Activated T-helper 1 cell treated with anti-CD3 and anti-CD28 coated beads, Interleukin-12 subunit alpha, Interleukin-12 subunit beta, Interleukin-2, Interleukin-4 antibody, amounts not matched to agents 30 ng/mL and 10 ng/mL and 1 ng/mL, durations not matched to agents 14 hours and 24 hours and 36 hours (primary cell): ENCODE measurements at regions of chr21 and their contacts with region 1.

Region 1: GRCh38 chr21:34967509-34968289 is 81.4 kb downstream of the RUNX1 start:
- DNase-seq: no peak
- H3K4me3 Mint-ChIP-seq: peak overlapping the region; percentile 80
- H3K27ac Mint-ChIP-seq: peak overlapping the region; percentile 94
- H3K4me1 Mint-ChIP-seq: peaks cover 91% of the 10 kb centered on the region
- H3K27me3 Mint-ChIP-seq: peaks cover 2% of the 10 kb centered on the region

Region 2: GRCh38 chr21:34933609-34934335 is 33.9 kb before region 1 on chr21:
- intact Hi-C with region 1: loop called (anchors 1 kb)
- DNase-seq: peak; percentile 37
- H3K4me3 Mint-ChIP-seq: peak overlapping the region; percentile 75
- H3K27ac Mint-ChIP-seq: peak overlapping the region; percentile 95
- H3K4me1 Mint-ChIP-seq: peaks cover 86% of the 10 kb centered on the region
- H3K27me3 Mint-ChIP-seq: no peaks in the 10 kb centered on the region

Region 3: GRCh38 chr21:35026617-35027562 is 59.2 kb after region 1 on chr21:
- intact Hi-C with region 1: loop called (anchors 1 kb)
- DNase-seq: peak; percentile 83
- H3K4me3 Mint-ChIP-seq: peak overlapping the region; percentile 85
- H3K27ac Mint-ChIP-seq: peak overlapping the region; percentile 99
- H3K4me1 Mint-ChIP-seq: peaks cover 91% of the 10 kb centered on the region
- H3K27me3 Mint-ChIP-seq: no peaks in the 10 kb centered on the region

Region 4: DNA sequence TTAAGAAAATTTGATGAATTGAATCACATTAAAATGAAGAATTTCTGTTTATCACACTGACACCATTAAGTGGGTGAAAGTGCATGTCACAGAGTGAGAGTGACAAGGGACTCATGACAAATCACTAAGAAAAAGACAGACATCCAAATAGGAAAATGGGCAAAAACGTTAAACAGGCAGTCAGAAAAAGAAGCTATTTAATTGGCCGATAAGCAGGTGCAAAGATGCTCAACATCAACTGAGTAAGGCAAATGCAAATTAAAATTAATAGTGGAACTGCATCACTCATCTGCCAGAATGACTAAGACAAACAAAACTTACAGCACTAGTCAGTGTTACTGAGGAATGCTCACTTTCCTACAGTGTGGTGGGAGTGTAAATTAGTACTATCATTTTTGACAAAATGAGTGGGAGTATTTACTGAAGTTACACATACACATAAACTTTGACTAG is 120.6 kb after region 1 on chr21:
- intact Hi-C with region 1: loop called (anchors 1 kb)
- DNase-seq: no peak
- H3K4me3 Mint-ChIP-seq: no peak overlapping the region
- H3K27ac Mint-ChIP-seq: peak overlapping the region; percentile 89
- H3K4me1 Mint-ChIP-seq: peaks cover 36% of the 10 kb centered on the region
- H3K27me3 Mint-ChIP-seq: no peaks in the 10 kb centered on the region

Region 5: GRCh38 chr21:35226948-35227744 is 259.4 kb after region 1 on chr21:
- intact Hi-C with region 1: loop called (anchors 5 kb)
- DNase-seq: peak; percentile 42
- H3K4me3 Mint-ChIP-seq: peak overlapping the region; percentile 27
- H3K27ac Mint-ChIP-seq: peak overlapping the region; percentile 6
- H3K4me1 Mint-ChIP-seq: peaks cover 41% of the 10 kb centered on the region
- H3K27me3 Mint-ChIP-seq: peaks cover 10% of the 10 kb centered on the region